Activated naive CD4-positive, alpha-beta T cell treated with anti-CD3 and anti-CD28 coated beads, Interleukin-2, amount 10 ng/mL, durations not matched to agents 7 days and 5 days (primary cell): ENCODE measurements at regions of chr1 and their contacts with region 1.

Region 1: DNA sequence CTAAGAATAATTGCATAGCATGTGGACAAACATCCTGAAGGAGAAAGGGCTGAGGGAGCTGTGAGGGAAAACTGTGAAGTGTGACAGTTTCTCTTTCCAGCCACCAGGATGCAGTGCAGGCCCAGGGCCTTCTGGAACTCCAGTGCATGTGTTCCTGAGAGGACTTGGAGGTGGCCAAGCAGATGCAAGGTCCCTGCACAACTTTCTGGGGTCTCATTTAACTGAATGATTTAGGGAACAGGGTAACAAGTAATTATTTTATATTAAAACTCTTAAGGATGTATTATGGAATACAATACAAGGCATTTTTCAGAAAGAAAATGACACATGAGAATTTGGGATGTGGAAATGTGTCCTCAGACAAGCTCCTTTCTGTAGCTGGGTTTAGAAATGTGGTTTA is 61.2 kb upstream of the MCOLN3 start:
- DNase-seq: peak; percentile 55
- H3K4me3 Mint-ChIP-seq: no peak overlapping the region
- H3K27ac Mint-ChIP-seq: no peak overlapping the region
- H3K4me1 Mint-ChIP-seq: no peaks in the 10 kb centered on the region
- H3K27me3 Mint-ChIP-seq: peaks cover 16% of the 10 kb centered on the region

Region 2: GRCh38 chr1:85091671-85092280 is 17.7 kb before region 1 on chr1:
- CTCF ChIA-PET with region 1: interaction called, 16 read pairs
- DNase-seq: no peak
- H3K4me3 Mint-ChIP-seq: peak overlapping the region; percentile 33
- H3K27ac Mint-ChIP-seq: no peak overlapping the region
- H3K4me1 Mint-ChIP-seq: peaks cover 15% of the 10 kb centered on the region
- H3K27me3 Mint-ChIP-seq: peaks cover 8% of the 10 kb centered on the region

Region 3: GRCh38 chr1:85240174-85240601 is 130.7 kb after region 1 on chr1:
- CTCF ChIA-PET with region 1: interaction called, 27 read pairs
- DNase-seq: peak; percentile 28
- H3K4me3 Mint-ChIP-seq: no peak overlapping the region
- H3K27ac Mint-ChIP-seq: peak overlapping the region; percentile 68
- H3K4me1 Mint-ChIP-seq: peaks cover 21% of the 10 kb centered on the region
- H3K27me3 Mint-ChIP-seq: peaks cover 14% of the 10 kb centered on the region